ENCODE measurements at regions of chr2 and their contacts with region 1.

Region 1: DNA sequence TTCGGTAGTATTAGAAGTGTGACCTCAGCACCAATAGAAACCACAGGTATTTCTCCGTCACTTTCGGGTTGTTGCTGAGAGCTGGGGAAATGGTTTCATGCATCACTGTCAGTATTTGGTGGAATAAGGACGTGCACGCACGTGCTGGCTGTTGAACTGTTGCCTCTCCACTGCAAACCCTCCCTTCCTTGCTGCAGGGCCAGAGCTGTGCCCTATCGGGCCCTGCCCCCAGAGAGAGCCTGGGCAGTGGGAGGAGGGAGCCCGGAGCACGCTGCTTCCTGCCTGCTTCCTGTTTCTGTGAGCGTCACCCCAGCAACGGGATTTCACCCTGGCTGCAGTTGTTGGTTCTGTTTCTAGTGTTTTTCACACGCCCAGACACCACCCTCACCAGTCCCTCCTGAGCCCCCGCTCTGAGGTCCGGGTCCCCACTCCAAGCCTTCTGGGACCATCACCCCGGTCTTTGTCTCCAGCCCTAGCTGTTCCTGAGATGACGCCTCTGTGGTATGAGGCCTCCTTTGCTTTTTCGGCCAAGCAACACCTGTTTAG is 47.4 kb downstream of the LRRFIP1 start:
- DNase-seq: peak; percentile 71 to 92 (median 88)
- ATAC-seq: peak; percentile 77
- H3K4me3 ChIP-seq: peak overlapping the region; percentile 66
- H3K4me3 Mint-ChIP-seq: peak overlapping the region; percentile 84 to 97 (median 90)
- H3K27ac ChIP-seq: peak overlapping the region; percentile 99
- H3K27ac Mint-ChIP-seq: peak overlapping the region; percentile 94 to 100 (median 99)
- H3K4me1 ChIP-seq: peaks cover 30 to 38% of the 10 kb centered on the region in 2 donors
- H3K4me1 Mint-ChIP-seq: peaks cover 37 to 62% (median 57%) of the 10 kb centered on the region in 7 donors
- H3K27me3 ChIP-seq: no peaks in the 10 kb centered on the region
- H3K27me3 Mint-ChIP-seq: peaks cover 0 to 6% (median 0%) of the 10 kb centered on the region in 5 donors

Region 2: GRCh38 chr2:237434866-237435311 is 239.9 kb before region 1 on chr2:
- CTCF ChIA-PET with region 1: no interaction called
- POLR2A ChIA-PET with region 1: no interaction called
- intact Hi-C with region 1: loop called in 1 of 2 experiments (anchors 2 kb)
- DNase-seq: peak; percentile 29 to 85 (median 71)
- ATAC-seq: peak; percentile 83
- H3K4me3 ChIP-seq: peak overlapping the region; percentile 44
- H3K4me3 Mint-ChIP-seq: peak overlapping the region; percentile 60 to 89 (median 81)
- H3K27ac ChIP-seq: peak overlapping the region; percentile 64
- H3K27ac Mint-ChIP-seq: peak overlapping the region; percentile 84 to 100 (median 95)
- H3K4me1 ChIP-seq: peaks cover 35 to 84% of the 10 kb centered on the region in 2 donors
- H3K4me1 Mint-ChIP-seq: peaks cover 53 to 94% (median 91%) of the 10 kb centered on the region in 7 donors
- H3K27me3 ChIP-seq: no peaks in the 10 kb centered on the region
- H3K27me3 Mint-ChIP-seq: no peaks in the 10 kb centered on the region

Region 3: GRCh38 chr2:237603718-237604362 is 71.0 kb before region 1 on chr2:
- CTCF ChIA-PET with region 1: interaction called, 3 read pairs
- POLR2A ChIA-PET with region 1: interaction called, 3 read pairs
- intact Hi-C with region 1: loop called (anchors 1 to 2 kb)
- DNase-seq: peak; percentile 39 to 91 (median 84)
- ATAC-seq: peak; percentile 98
- H3K4me3 ChIP-seq: peak overlapping the region; percentile 38
- H3K4me3 Mint-ChIP-seq: peak overlapping the region; percentile 64 to 85 (median 73)
- H3K27ac ChIP-seq: peak overlapping the region; percentile 88
- H3K27ac Mint-ChIP-seq: peak overlapping the region; percentile 93 to 99 (median 97)
- H3K4me1 ChIP-seq: peaks cover 8 to 23% of the 10 kb centered on the region in 2 donors
- H3K4me1 Mint-ChIP-seq: peaks cover 18 to 42% (median 37%) of the 10 kb centered on the region in 7 donors
- H3K27me3 ChIP-seq: no peaks in the 10 kb centered on the region
- H3K27me3 Mint-ChIP-seq: peaks cover 0 to 11% (median 0%) of the 10 kb centered on the region in 5 donors

Region 4: GRCh38 chr2:237700512-237701032 is 25.8 kb after region 1 on chr2:
- CTCF ChIA-PET with region 1: interaction called, 111 read pairs
- POLR2A ChIA-PET with region 1: interaction called, 349 read pairs
- intact Hi-C with region 1: loop called (anchors 1 kb)
- DNase-seq: peak in 5 of 9 donors; percentile 50 to 89 (median 65)
- ATAC-seq: peak; percentile 78
- H3K4me3 ChIP-seq: peak overlapping the region; percentile 23
- H3K4me3 Mint-ChIP-seq: peak overlapping the region; percentile 59 to 91 (median 76)
- H3K27ac ChIP-seq: peak overlapping the region; percentile 76
- H3K27ac Mint-ChIP-seq: peak overlapping the region; percentile 85 to 98 (median 92)
- H3K4me1 ChIP-seq: peaks cover 92 to 95% of the 10 kb centered on the region in 2 donors
- H3K4me1 Mint-ChIP-seq: peaks cover 81 to 99% (median 95%) of the 10 kb centered on the region in 7 donors
- H3K27me3 ChIP-seq: no peaks in the 10 kb centered on the region
- H3K27me3 Mint-ChIP-seq: no peaks in the 10 kb centered on the region

Region 5: GRCh38 chr2:237774802-237775553 is 100.2 kb after region 1 on chr2:
- CTCF ChIA-PET with region 1: interaction called, 3 read pairs
- POLR2A ChIA-PET with region 1: no interaction called
- intact Hi-C with region 1: loop called (anchors 1 kb)
- DNase-seq: peak in 7 of 9 donors; percentile 13 to 37 (median 26)
- ATAC-seq: peak; percentile 80
- H3K4me3 ChIP-seq: no peak overlapping the region
- H3K4me3 Mint-ChIP-seq: no peak overlapping the region
- H3K27ac ChIP-seq: no peak overlapping the region
- H3K27ac Mint-ChIP-seq: peak overlapping the region in 6 of 9 donors; percentile 21 to 82 (median 62)
- H3K4me1 ChIP-seq: no peaks in the 10 kb centered on the region
- H3K4me1 Mint-ChIP-seq: peaks cover 0 to 4% (median 0%) of the 10 kb centered on the region in 7 donors
- H3K27me3 ChIP-seq: no peaks in the 10 kb centered on the region
- H3K27me3 Mint-ChIP-seq: no peaks in the 10 kb centered on the region

Region 6: DNA sequence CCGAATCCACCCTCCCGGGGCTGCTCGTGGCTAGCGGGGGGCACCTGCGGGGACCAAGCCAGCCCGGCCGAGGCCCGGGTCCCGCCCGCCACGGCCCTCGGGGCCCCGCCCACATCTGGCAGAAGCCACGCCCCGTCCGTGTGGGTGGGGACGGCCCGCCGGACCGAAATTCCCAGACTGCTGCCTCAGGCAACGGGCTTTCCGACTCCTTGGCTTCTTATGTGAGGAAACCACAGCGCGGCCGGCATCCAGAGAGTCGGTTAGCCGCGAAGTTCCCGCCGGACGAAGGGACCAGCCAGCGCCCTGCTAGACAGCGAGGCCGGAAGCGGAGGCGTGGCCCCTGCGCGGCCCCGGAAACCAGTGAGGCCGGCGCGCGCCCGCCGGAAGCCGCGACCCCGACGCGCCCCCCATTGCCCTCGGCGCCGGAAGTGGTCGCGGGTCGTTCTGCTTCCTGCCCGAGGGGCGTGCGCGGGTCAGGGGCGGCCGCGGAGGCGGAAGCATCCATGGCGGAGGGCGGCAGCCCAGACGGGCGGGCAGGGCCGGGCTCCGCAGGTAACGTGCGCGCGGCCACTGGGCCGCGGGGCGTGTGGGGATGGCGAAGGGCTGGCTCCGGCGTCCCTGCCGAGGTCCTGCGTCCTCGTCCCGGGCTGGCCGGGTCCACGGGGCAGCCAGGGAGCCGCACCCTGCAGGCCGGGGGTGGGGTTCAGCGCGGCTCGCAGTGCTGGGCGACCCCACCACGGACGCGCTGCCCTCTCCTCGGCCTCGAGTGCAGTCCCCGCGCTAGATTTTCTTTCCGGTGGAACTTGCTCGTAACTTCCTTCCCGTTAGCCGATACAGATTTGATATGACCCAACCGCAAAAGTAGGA is 752.0 kb after region 1 on chr2 and contains the start of gene ASB1:
- CTCF ChIA-PET with region 1: no interaction called
- POLR2A ChIA-PET with region 1: no interaction called
- intact Hi-C with region 1: loop called in 1 of 2 experiments (anchors 10 kb)
- DNase-seq: peak; percentile 62 to 89 (median 72)
- ATAC-seq: peak; percentile 87
- H3K4me3 ChIP-seq: peak within 1 kb of the TSS; percentile 90
- H3K4me3 Mint-ChIP-seq: peak within 1 kb of the TSS; percentile 90 to 97 (median 92)
- H3K27ac ChIP-seq: peak within 1 kb of the TSS; percentile 80
- H3K27ac Mint-ChIP-seq: peak within 1 kb of the TSS; percentile 87 to 95 (median 93)
- H3K4me1 ChIP-seq: peaks cover 3 to 15% of the 10 kb centered on the region in 2 donors
- H3K4me1 Mint-ChIP-seq: peaks cover 28 to 53% (median 49%) of the 10 kb centered on the region in 7 donors
- H3K27me3 ChIP-seq: no peaks in the 10 kb centered on the region
- H3K27me3 Mint-ChIP-seq: no peaks in the 10 kb centered on the region
- total RNA-seq, gene ASB1: 25.0 to 55.2 (median 33.1) TPM

Measured in naive thymus-derived CD4-positive, alpha-beta T cell (primary cell).